Activated CD4-positive, alpha-beta memory T cell treated with anti-CD3 and anti-CD28 coated beads for 36 hours (primary cell): ENCODE measurements at regions of chr2 and their contacts with region 1.

Region 1: DNA sequence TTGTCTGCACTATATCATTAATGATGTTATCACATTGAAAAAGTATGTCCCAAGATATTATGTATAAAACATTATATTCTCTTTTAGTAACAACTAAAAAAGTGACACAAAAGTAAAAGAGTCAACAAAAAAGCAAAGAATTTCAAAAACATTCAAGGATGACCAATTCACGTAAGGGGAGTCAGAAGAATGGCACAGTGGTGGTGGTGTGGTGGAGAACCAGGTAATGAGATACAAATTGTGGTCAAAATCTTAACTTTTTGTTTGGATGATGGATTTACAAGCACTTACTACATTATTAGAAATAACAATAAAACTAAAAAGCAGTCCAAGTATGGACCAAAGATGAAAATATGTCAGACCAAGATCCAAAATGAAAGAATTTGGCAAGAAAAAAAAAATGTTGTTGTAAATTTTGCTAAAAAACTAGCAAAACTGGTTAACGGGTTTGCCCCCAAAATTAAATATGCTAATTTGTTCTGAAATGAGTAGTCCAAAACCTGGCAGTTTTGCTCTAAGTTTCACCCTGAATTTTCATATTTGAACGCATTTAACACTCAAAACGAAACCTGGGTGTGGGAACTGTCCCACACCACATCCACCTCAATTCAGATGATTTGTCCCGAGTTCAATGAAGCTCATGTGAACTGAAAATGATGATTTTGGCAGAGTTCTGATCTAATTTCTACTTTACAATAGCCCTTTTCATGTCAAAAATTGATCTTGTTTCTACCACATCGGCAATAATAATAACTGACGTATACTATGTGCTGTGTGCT is 135.8 kb downstream of the IKZF2 start:
- DNase-seq: peak; percentile 76
- H3K4me3 Mint-ChIP-seq: peak overlapping the region; percentile 35
- H3K27ac Mint-ChIP-seq: peak overlapping the region; percentile 58
- H3K4me1 Mint-ChIP-seq: peaks cover 26% of the 10 kb centered on the region
- H3K27me3 Mint-ChIP-seq: peaks cover 13% of the 10 kb centered on the region

Region 2: DNA sequence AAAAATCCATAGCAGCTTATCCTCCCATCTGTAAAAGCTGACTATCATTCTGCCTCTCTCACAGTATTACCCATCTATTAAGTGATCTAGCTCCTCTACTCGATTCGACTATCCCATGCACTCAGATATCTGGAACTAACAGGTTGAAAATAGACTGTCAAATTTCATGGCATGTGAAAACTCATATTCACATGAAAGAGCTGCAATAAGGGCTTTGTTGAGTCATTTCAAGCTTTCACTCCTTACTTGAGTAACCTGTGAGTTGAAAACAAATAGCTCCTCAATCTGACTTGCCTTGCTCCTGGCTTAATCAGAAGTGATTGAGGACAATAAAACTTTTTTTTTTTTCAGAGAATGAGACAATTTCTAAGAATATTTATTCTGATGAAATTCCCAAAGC is 284.6 kb before region 1 on chr2:
- CTCF ChIA-PET with region 1: no interaction called
- POLR2A ChIA-PET with region 1: no interaction called
- intact Hi-C with region 1: loop called (anchors 2 kb)
- DNase-seq: no peak
- H3K4me3 Mint-ChIP-seq: no peak overlapping the region
- H3K27ac Mint-ChIP-seq: no peak overlapping the region
- H3K4me1 Mint-ChIP-seq: peaks cover 5% of the 10 kb centered on the region
- H3K27me3 Mint-ChIP-seq: no peaks in the 10 kb centered on the region

Region 3: GRCh38 chr2:212863185-212863588 is 152.4 kb before region 1 on chr2:
- CTCF ChIA-PET with region 1: no interaction called
- POLR2A ChIA-PET with region 1: no interaction called
- intact Hi-C with region 1: loop called (anchors 5 kb)
- DNase-seq: peak; percentile 41
- H3K4me3 Mint-ChIP-seq: no peak overlapping the region
- H3K27ac Mint-ChIP-seq: no peak overlapping the region
- H3K4me1 Mint-ChIP-seq: no peaks in the 10 kb centered on the region
- H3K27me3 Mint-ChIP-seq: no peaks in the 10 kb centered on the region

Region 4: GRCh38 chr2:212928681-212929080 is 86.9 kb before region 1 on chr2:
- CTCF ChIA-PET with region 1: no interaction called
- POLR2A ChIA-PET with region 1: no interaction called
- intact Hi-C with region 1: loop called (anchors 2 kb)
- DNase-seq: no peak
- H3K4me3 Mint-ChIP-seq: no peak overlapping the region
- H3K27ac Mint-ChIP-seq: no peak overlapping the region
- H3K4me1 Mint-ChIP-seq: peaks cover 6% of the 10 kb centered on the region
- H3K27me3 Mint-ChIP-seq: no peaks in the 10 kb centered on the region

Region 5: GRCh38 chr2:212968280-212968679 is 47.3 kb before region 1 on chr2:
- CTCF ChIA-PET with region 1: no interaction called
- POLR2A ChIA-PET with region 1: no interaction called
- intact Hi-C with region 1: loop called (anchors 2 kb)
- DNase-seq: peak; percentile 13
- H3K4me3 Mint-ChIP-seq: no peak overlapping the region
- H3K27ac Mint-ChIP-seq: peak overlapping the region; percentile 44
- H3K4me1 Mint-ChIP-seq: peaks cover 7% of the 10 kb centered on the region
- H3K27me3 Mint-ChIP-seq: no peaks in the 10 kb centered on the region

Region 6: DNA sequence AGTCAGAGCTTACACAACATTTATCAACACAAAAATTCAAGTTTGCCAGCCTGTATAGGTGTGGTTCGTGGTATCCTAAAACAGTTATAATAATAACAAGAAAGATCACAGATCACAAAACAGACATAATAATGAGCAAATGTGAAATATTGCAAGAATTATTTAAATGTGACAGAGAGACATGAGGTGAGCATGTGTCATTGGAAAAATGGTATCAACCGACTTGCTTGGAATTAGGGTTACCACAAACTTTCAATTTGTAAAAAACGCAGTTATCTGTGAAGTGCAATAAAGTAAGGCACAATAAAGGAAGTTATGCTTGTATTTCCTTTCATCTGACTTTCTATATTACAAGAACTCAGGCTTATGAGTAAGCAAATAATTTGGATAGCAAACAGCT is 19.0 kb after region 1 on chr2:
- CTCF ChIA-PET with region 1: no interaction called
- POLR2A ChIA-PET with region 1: no interaction called
- intact Hi-C with region 1: loop called (anchors 1 kb)
- DNase-seq: no peak
- H3K4me3 Mint-ChIP-seq: no peak overlapping the region
- H3K27ac Mint-ChIP-seq: no peak overlapping the region
- H3K4me1 Mint-ChIP-seq: peaks cover 19% of the 10 kb centered on the region
- H3K27me3 Mint-ChIP-seq: no peaks in the 10 kb centered on the region

Region 7: GRCh38 chr2:213119061-213119856 is 103.7 kb after region 1 on chr2:
- CTCF ChIA-PET with region 1: no interaction called
- POLR2A ChIA-PET with region 1: no interaction called
- intact Hi-C with region 1: loop called (anchors 1 kb)
- DNase-seq: peak; percentile 27
- H3K4me3 Mint-ChIP-seq: no peak overlapping the region
- H3K27ac Mint-ChIP-seq: peak overlapping the region; percentile 67
- H3K4me1 Mint-ChIP-seq: peaks cover 14% of the 10 kb centered on the region
- H3K27me3 Mint-ChIP-seq: no peaks in the 10 kb centered on the region